ENCODE measurements at regions of chr1 and their contacts with region 1.

Region 1: GRCh38 chr1:108559215-108560186 is at the start of gene EEIG2:
- DNase-seq: peak; percentile 32
- H3K4me3 ChIP-seq: peak within 1 kb of the TSS; percentile 63
- H3K27me3 ChIP-seq: no peaks in the 10 kb centered on the region; the same call in none of the 2 replicates
- CTCF ChIP-seq: peak; percentile 28; the same call in 1 of the 2 replicates
- polyA plus RNA-seq, gene EEIG2: 2.6 and 3.8 TPM in 2 replicates

Region 2: GRCh38 chr1:108512239-108512981 is 47.1 kb before region 1 on chr1:
- CTCF ChIA-PET with region 1: interaction called, 13 read pairs
- POLR2A ChIA-PET with region 1: no interaction called
- DNase-seq: no peak
- H3K4me3 ChIP-seq: no peak overlapping the region
- H3K27me3 ChIP-seq: no peaks in the 10 kb centered on the region
- CTCF ChIP-seq: peak; percentile 77

Region 3: GRCh38 chr1:108570128-108570527 is 10.6 kb after region 1 on chr1:
- CTCF ChIA-PET with region 1: interaction called, 24 read pairs
- POLR2A ChIA-PET with region 1: no interaction called
- DNase-seq: no peak
- H3K4me3 ChIP-seq: no peak overlapping the region
- H3K27me3 ChIP-seq: no peaks in the 10 kb centered on the region
- CTCF ChIP-seq: peak; percentile 33

Region 4: DNA sequence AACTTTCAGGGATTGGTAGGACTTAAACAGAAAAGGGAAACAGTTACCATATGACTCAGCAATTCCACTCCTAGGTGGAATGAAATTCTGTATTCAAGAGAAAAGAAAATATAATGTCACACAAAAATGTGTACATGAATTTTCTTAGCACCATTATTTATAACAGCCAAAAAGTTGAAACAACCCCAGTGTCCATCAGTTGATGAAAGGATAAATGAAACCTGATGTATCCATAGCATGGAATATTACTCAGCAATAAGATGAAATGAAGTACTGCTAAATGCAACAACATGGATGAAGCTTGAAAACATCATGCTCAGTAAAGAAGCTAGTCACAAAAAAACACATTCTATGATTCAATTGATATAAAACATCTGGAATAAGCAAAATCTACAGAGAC is 15.9 kb after region 1 on chr1:
- CTCF ChIA-PET with region 1: interaction called, 24 read pairs
- POLR2A ChIA-PET with region 1: no interaction called
- DNase-seq: no peak
- H3K4me3 ChIP-seq: no peak overlapping the region
- H3K27me3 ChIP-seq: no peaks in the 10 kb centered on the region
- CTCF ChIP-seq: no peak

Region 5: GRCh38 chr1:108584348-108584856 is 24.9 kb after region 1 on chr1:
- CTCF ChIA-PET with region 1: interaction called, 16 read pairs
- POLR2A ChIA-PET with region 1: interaction called, 3 read pairs
- DNase-seq: no peak
- H3K4me3 ChIP-seq: no peak overlapping the region
- H3K27me3 ChIP-seq: no peaks in the 10 kb centered on the region
- CTCF ChIP-seq: no peak

Region 6: DNA sequence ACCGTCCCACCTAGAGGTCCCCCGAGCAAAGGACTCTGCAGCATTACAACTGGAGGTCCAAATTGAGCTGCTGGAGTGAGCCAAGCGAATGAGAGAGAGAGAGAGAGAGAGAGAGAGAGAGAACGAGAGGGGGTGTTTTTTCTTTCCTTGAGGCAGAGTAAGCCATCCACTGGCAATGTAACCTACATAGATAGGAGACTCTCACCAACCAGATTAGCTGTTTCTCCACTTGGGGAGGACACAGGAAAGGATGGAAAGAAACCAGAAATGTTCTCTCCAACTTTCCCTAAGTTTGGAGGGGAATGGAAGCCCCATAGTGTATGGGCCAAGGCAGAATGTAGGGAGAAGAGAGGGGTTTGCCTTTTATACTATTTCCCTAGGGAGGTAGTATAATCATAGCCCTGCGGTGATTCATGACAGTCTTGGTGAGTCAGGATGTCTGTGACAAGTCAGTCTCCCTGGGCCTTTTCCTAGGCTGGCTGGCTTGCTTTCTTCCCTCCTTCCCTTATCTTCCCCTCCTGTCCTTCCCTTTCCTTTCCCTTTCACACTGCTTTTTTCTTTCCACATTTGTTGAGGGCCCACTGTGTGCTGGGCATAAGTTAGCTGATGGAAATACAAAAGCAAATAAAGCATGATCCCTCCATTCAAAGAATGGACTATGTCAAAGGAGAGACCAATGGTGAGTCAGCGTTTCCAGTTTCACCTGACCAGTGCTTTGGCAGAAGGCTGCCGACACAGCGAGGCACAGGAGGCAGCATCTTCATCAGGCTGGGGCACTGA is 160.3 kb after region 1 on chr1:
- CTCF ChIA-PET with region 1: no interaction called
- POLR2A ChIA-PET with region 1: no interaction called
- DNase-seq: peak; percentile 43
- H3K4me3 ChIP-seq: no peak overlapping the region
- H3K27me3 ChIP-seq: no peaks in the 10 kb centered on the region
- CTCF ChIP-seq: no peak

Region 7: DNA sequence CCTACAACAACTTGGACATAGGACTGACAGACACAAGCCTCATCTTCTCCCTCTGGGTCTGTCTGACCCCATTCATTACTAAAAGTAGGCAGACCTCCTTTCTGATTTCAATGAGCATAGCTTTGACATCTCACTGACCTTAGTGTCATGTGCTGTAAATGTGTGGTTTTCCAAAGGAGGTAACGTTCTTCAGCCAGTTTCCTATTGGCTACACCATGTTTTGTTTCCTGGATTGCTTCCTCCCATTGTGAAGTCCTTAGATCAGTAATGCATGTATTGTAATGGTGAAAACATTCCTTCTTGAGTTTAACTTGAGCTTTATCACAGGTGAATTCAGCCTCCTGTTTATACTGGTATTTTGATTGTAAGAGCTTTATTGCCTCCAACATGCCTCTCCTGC is 207.6 kb after region 1 on chr1:
- CTCF ChIA-PET with region 1: no interaction called
- POLR2A ChIA-PET with region 1: no interaction called
- DNase-seq: no peak
- H3K4me3 ChIP-seq: no peak overlapping the region
- H3K27me3 ChIP-seq: no peaks in the 10 kb centered on the region
- CTCF ChIP-seq: no peak